ENCODE measurements at regions of chr4 and their contacts with region 1.

Region 1: GRCh38 chr4:122758033-122758432 is 25.5 kb downstream of the BBS12 start:
- DNase-seq: peak in 1 of 2 donors; percentile 62
- ATAC-seq: peak in 2 of 3 donors; percentile 40 to 57
- H3K4me3 ChIP-seq: no peak overlapping the region
- H3K4me3 Mint-ChIP-seq: no peak overlapping the region
- H3K27ac ChIP-seq: no peak overlapping the region
- H3K27ac Mint-ChIP-seq: no peak overlapping the region
- H3K4me1 ChIP-seq: peaks cover 6% of the 10 kb centered on the region
- H3K4me1 Mint-ChIP-seq: peaks cover 26 to 29% of the 10 kb centered on the region in 2 donors
- H3K27me3 ChIP-seq: peaks cover 5% of the 10 kb centered on the region
- H3K27me3 Mint-ChIP-seq: peaks cover 7 to 25% of the 10 kb centered on the region in 2 donors
- CTCF ChIP-seq: peak; percentile 87

Region 2: GRCh38 chr4:122914292-122914904 is 156.4 kb after region 1 on chr4:
- intact Hi-C with region 1: loop called (anchors 1 kb)
- DNase-seq: no peak
- ATAC-seq: peak; percentile 69 to 71 (median 70)
- H3K4me3 ChIP-seq: no peak overlapping the region
- H3K4me3 Mint-ChIP-seq: no peak overlapping the region
- H3K27ac ChIP-seq: no peak overlapping the region
- H3K27ac Mint-ChIP-seq: no peak overlapping the region
- H3K4me1 ChIP-seq: no peaks in the 10 kb centered on the region
- H3K4me1 Mint-ChIP-seq: no peaks in the 10 kb centered on the region
- H3K27me3 ChIP-seq: no peaks in the 10 kb centered on the region
- H3K27me3 Mint-ChIP-seq: no peaks in the 10 kb centered on the region
- CTCF ChIP-seq: peak; percentile 59

Region 3: GRCh38 chr4:122930862-122931261 is 172.8 kb after region 1 on chr4:
- intact Hi-C with region 1: loop called (anchors 1 kb)
- DNase-seq: peak in 1 of 2 donors; percentile 34
- ATAC-seq: no peak
- H3K4me3 ChIP-seq: no peak overlapping the region
- H3K4me3 Mint-ChIP-seq: no peak overlapping the region
- H3K27ac ChIP-seq: no peak overlapping the region
- H3K27ac Mint-ChIP-seq: no peak overlapping the region
- H3K4me1 ChIP-seq: no peaks in the 10 kb centered on the region
- H3K4me1 Mint-ChIP-seq: peaks cover 0 to 5% of the 10 kb centered on the region in 2 donors
- H3K27me3 ChIP-seq: no peaks in the 10 kb centered on the region
- H3K27me3 Mint-ChIP-seq: no peaks in the 10 kb centered on the region
- CTCF ChIP-seq: peak; percentile 72

Region 4: GRCh38 chr4:124322234-124323065 is 1564.4 kb after region 1 on chr4:
- intact Hi-C with region 1: loop called (anchors 10 kb)
- DNase-seq: peak in 1 of 2 donors; percentile 35
- ATAC-seq: peak in 1 of 3 donors; percentile 41
- H3K4me3 ChIP-seq: no peak overlapping the region
- H3K4me3 Mint-ChIP-seq: no peak overlapping the region
- H3K27ac ChIP-seq: no peak overlapping the region
- H3K27ac Mint-ChIP-seq: no peak overlapping the region
- H3K4me1 ChIP-seq: no peaks in the 10 kb centered on the region
- H3K4me1 Mint-ChIP-seq: no peaks in the 10 kb centered on the region
- H3K27me3 ChIP-seq: no peaks in the 10 kb centered on the region
- H3K27me3 Mint-ChIP-seq: peaks cover 0 to 6% of the 10 kb centered on the region in 2 donors
- CTCF ChIP-seq: peak; percentile 67